ENCODE measurements at regions of chr2 and their contacts with region 1.

Region 1: GRCh38 chr2:86675511-86676015 is 44.5 kb upstream of the RMND5A start:
- DNase-seq: peak; percentile 55
- ATAC-seq: peak; percentile 77
- H3K4me3 ChIP-seq: no peak overlapping the region
- H3K27ac ChIP-seq: no peak overlapping the region
- H3K4me1 ChIP-seq: peaks cover 39% of the 10 kb centered on the region
- H3K27me3 ChIP-seq: no peaks in the 10 kb centered on the region
- CTCF ChIP-seq: peak; percentile 73
- EP300 ChIP-seq: no peak
- POLR2A ChIP-seq: no peak
- RAD21 ChIP-seq: peak; percentile 22; the same call in 1 of the 2 replicates

Region 2: GRCh38 chr2:86518481-86518880 is 157.1 kb before region 1 on chr2:
- CTCF ChIA-PET with region 1: interaction called, 6 read pairs
- POLR2A ChIA-PET with region 1: no interaction called
- in situ Hi-C with region 1: no loop called
- intact Hi-C with region 1: loop called (anchors 1 kb)
- DNase-seq: peak; percentile 39
- ATAC-seq: peak; percentile 90
- H3K4me3 ChIP-seq: no peak overlapping the region
- H3K27ac ChIP-seq: no peak overlapping the region
- H3K4me1 ChIP-seq: no peaks in the 10 kb centered on the region
- H3K27me3 ChIP-seq: no peaks in the 10 kb centered on the region
- CTCF ChIP-seq: peak; percentile 74
- EP300 ChIP-seq: no peak
- POLR2A ChIP-seq: no peak
- RAD21 ChIP-seq: peak; percentile 70

Region 3: GRCh38 chr2:86623651-86624541 is 51.7 kb before region 1 on chr2 and contains the start of gene RNF103:
- CTCF ChIA-PET with region 1: no interaction called
- POLR2A ChIA-PET with region 1: interaction called, 3 read pairs
- in situ Hi-C with region 1: loop called (anchors 10 kb)
- intact Hi-C with region 1: loop called (anchors 2 kb)
- DNase-seq: peak; percentile 88
- ATAC-seq: peak; percentile 92
- H3K4me3 ChIP-seq: peak within 1 kb of the TSS; percentile 67 to 89 (median 87)
- H3K27ac ChIP-seq: peak within 1 kb of the TSS; percentile 90
- H3K4me1 ChIP-seq: peaks cover 62% of the 10 kb centered on the region
- H3K27me3 ChIP-seq: no peaks in the 10 kb centered on the region; a peak in 1 of 5 replicates
- CTCF ChIP-seq: peak; percentile 15; the same call in 1 of the 2 replicates
- EP300 ChIP-seq: peak in 1 of 2 experiments; percentile 36; a peak in 2 of 4 replicates
- POLR2A ChIP-seq: peak; percentile 90 to 98
- RAD21 ChIP-seq: no peak; the same call in 1 of the 2 replicates
- total RNA-seq, gene RNF103: 12.6 and 19.8 TPM in 2 replicates

Region 4: GRCh38 chr2:86632672-86633651 is 42.6 kb before region 1 on chr2:
- CTCF ChIA-PET with region 1: no interaction called
- POLR2A ChIA-PET with region 1: interaction called, 3 read pairs
- in situ Hi-C with region 1: loop called (anchors 10 kb)
- intact Hi-C with region 1: loop called (anchors 5 kb)
- DNase-seq: peak; percentile 83
- ATAC-seq: peak; percentile 86
- H3K4me3 ChIP-seq: peak overlapping the region in 2 of 3 experiments; percentile 36 to 51; a peak in 4 of 6 replicates
- H3K27ac ChIP-seq: peak overlapping the region; percentile 67
- H3K4me1 ChIP-seq: peaks cover 85% of the 10 kb centered on the region
- H3K27me3 ChIP-seq: no peaks in the 10 kb centered on the region
- CTCF ChIP-seq: no peak
- EP300 ChIP-seq: peak in 1 of 2 experiments; percentile 51; a peak in 1 of 4 replicates
- POLR2A ChIP-seq: no peak
- RAD21 ChIP-seq: no peak

Region 5: GRCh38 chr2:86649119-86649947 is 26.2 kb before region 1 on chr2:
- CTCF ChIA-PET with region 1: no interaction called
- POLR2A ChIA-PET with region 1: no interaction called
- in situ Hi-C with region 1: no loop called
- intact Hi-C with region 1: loop called (anchors 1 kb)
- DNase-seq: peak; percentile 97
- ATAC-seq: peak; percentile 100
- H3K4me3 ChIP-seq: peak overlapping the region in 1 of 3 experiments; percentile 20; a peak in 1 of 6 replicates
- H3K27ac ChIP-seq: peak overlapping the region; percentile 84
- H3K4me1 ChIP-seq: peaks cover 29% of the 10 kb centered on the region
- H3K27me3 ChIP-seq: no peaks in the 10 kb centered on the region
- CTCF ChIP-seq: no peak
- EP300 ChIP-seq: peak; percentile 72 to 85; a peak in 3 of 4 replicates
- POLR2A ChIP-seq: peak in 1 of 2 experiments; percentile 45; a peak in 2 of 4 replicates
- RAD21 ChIP-seq: peak; percentile 39; the same call in 1 of the 2 replicates